Mammary epithelial cell (primary cell): ENCODE measurements at regions of chr14 and their contacts with region 1.

Region 1: DNA sequence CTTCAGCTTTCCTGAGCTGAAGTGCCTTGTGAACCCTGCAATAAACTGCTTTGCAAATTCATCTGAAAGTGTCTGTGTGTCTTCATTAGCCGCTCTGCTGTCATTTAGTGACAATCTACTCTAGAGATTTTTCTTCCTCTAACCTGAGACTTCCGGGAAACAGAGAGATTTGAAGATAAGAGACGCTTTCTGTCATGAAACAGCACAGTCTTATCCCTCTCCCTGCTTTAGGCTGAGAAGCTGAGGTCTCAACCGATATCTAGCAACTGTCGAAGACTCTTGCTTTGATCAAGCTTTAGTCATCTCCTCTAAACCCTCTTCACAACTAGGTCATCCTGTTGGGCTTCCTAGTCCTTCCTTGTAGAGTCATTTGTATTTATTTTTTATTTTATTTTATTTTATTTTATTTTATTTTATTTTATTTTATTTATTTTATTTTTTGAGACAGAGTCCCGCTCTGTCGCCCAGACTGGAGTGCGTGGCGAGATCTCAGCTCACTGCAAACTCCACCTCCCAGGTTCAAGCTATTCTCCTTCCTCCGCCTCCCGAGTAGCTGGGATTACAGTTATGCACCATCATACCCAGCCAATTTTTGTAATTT is 1.2 kb downstream of the RNASE2 start:
- DNase-seq: no peak
- H3K4me3 ChIP-seq: no peak overlapping the region
- H3K27ac ChIP-seq: no peak overlapping the region
- H3K4me1 ChIP-seq: no peaks in the 10 kb centered on the region
- H3K27me3 ChIP-seq: peaks cover 3% of the 10 kb centered on the region
- CTCF ChIP-seq: no peak

Region 2: DNA sequence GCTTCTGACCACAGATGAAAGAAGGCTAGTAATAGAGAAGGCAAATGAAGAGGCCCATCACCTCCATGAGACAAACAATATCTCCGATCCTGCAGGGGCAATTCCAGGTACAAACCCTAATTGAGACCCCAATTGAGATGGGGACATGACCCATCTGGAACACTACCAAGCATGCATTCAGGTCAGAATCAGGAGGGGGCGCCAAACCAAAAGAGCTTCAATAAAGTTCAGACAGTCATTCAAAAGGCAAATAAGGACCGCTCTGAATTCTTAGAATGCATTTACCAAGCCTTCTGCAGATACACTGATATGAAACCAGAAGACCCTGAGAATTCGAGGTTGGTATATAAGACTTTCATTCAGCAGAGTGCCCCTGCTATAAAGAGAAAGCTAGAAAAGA is 198.5 kb before region 1 on chr14:
- CTCF ChIA-PET with region 1: interaction called, 21 read pairs
- dilution Hi-C with region 1: no loop called
- in situ Hi-C with region 1: no loop called
- intact Hi-C with region 1: no loop called
- DNase-seq: no peak
- H3K4me3 ChIP-seq: no peak overlapping the region
- H3K27ac ChIP-seq: no peak overlapping the region
- H3K4me1 ChIP-seq: no peaks in the 10 kb centered on the region
- H3K27me3 ChIP-seq: no peaks in the 10 kb centered on the region
- CTCF ChIP-seq: no peak

Region 3: DNA sequence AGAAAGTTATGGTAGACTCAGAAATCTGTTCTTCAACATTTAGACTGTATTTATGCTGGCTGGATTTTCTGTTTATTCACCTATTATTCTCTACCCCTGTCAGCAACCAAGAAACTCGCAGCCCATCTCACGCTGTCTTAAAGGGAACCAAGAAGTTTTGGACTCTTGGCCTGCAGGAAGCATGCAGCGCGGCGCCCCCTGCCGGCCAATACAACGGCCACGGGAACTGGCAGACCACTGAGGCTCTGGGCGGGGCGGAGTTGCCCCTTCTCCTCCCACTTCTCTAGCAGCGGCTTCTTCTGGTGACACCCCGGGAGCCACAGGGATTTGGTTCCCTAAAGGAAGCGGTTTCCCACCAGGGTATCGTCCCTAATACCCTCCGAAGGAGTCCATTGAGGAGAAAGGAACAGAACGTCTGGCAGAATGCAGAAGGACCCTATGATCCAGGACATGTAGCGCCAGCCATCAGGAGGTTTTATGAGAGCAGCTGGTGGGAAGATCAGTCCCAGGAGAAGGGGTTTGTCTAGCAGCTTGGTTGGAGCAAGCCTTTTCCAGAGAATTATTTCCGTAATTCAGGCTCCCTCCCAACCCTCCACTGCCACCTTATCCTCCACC is 22.2 kb before region 1 on chr14:
- CTCF ChIA-PET with region 1: no interaction called
- dilution Hi-C with region 1: no loop called
- in situ Hi-C with region 1: no loop called
- intact Hi-C with region 1: no loop called
- DNase-seq: no peak
- H3K4me3 ChIP-seq: no peak overlapping the region
- H3K27ac ChIP-seq: no peak overlapping the region
- H3K4me1 ChIP-seq: no peaks in the 10 kb centered on the region
- H3K27me3 ChIP-seq: no peaks in the 10 kb centered on the region
- CTCF ChIP-seq: peak; percentile 39 to 40

Region 4: DNA sequence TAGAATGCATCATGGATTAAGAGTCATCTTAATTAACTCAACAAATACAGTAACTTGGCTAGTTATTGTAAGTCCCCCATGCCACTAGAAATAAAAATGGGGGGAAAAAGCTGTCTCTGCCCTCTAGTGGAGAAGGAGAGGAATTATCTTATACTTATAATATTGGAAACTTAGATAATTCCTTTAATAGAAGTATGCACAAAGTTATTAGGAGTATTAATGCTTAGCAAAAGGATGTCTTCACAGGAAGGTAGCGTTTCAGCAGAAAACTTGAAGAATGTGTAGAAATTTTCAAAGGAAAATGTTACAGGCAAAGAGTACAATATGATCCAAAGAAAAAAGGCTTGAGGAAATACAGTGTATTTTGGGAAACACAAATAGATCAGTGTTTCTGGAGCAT is 179.5 kb after region 1 on chr14:
- CTCF ChIA-PET with region 1: no interaction called
- dilution Hi-C with region 1: no loop called
- in situ Hi-C with region 1: no loop called
- intact Hi-C with region 1: no loop called
- DNase-seq: no peak
- H3K4me3 ChIP-seq: no peak overlapping the region
- H3K27ac ChIP-seq: no peak overlapping the region
- H3K4me1 ChIP-seq: no peaks in the 10 kb centered on the region
- H3K27me3 ChIP-seq: no peaks in the 10 kb centered on the region
- CTCF ChIP-seq: peak; percentile 62 to 64